ENCODE measurements at regions of chr18 and their contacts with region 1.

Region 1: DNA sequence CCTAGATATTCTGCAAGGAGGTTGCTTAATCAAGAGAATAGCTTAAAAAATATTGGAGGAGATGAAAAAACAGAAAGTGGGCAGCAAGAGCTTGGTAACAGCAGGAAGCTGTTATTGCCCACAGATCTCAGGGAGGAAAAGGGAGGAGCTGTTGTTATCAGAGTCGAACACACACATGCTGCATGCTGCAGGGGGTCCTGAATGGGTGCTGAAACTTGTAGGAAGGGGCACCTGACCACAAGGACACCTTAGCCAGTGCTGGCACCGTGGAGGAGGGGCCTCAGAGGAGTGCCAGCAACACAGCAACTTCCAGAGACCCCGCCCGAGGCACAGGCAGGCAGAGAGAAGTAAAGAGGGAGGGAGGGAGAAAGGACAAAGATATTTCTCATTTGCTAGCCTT is 332.9 kb downstream of the SOCS6 start:
- DNase-seq: no peak
- ATAC-seq: no peak
- H3K4me3 ChIP-seq: no peak overlapping the region
- H3K27ac ChIP-seq: no peak overlapping the region
- H3K4me1 ChIP-seq: no peaks in the 10 kb centered on the region
- H3K27me3 ChIP-seq: no peaks in the 10 kb centered on the region
- CTCF ChIP-seq: no peak
- EP300 ChIP-seq: no peak
- POLR2A ChIP-seq: no peak
- RAD21 ChIP-seq: no peak

Region 2: GRCh38 chr18:70720607-70721006 is 98.9 kb after region 1 on chr18:
- CTCF ChIA-PET with region 1: no interaction called
- POLR2A ChIA-PET with region 1: no interaction called
- in situ Hi-C with region 1: loop called (anchors 25 kb)
- intact Hi-C with region 1: no loop called
- DNase-seq: no peak
- ATAC-seq: no peak
- H3K4me3 ChIP-seq: no peak overlapping the region
- H3K27ac ChIP-seq: no peak overlapping the region
- H3K4me1 ChIP-seq: no peaks in the 10 kb centered on the region
- H3K27me3 ChIP-seq: no peaks in the 10 kb centered on the region
- CTCF ChIP-seq: no peak
- EP300 ChIP-seq: no peak
- POLR2A ChIP-seq: no peak
- RAD21 ChIP-seq: no peak

Region 3: GRCh38 chr18:70936160-70936559 is 314.4 kb after region 1 on chr18:
- CTCF ChIA-PET with region 1: no interaction called
- POLR2A ChIA-PET with region 1: no interaction called
- in situ Hi-C with region 1: no loop called
- intact Hi-C with region 1: no loop called
- DNase-seq: no peak
- ATAC-seq: no peak
- H3K4me3 ChIP-seq: no peak overlapping the region
- H3K27ac ChIP-seq: no peak overlapping the region
- H3K4me1 ChIP-seq: no peaks in the 10 kb centered on the region
- H3K27me3 ChIP-seq: no peaks in the 10 kb centered on the region; a peak in 1 of 5 replicates
- CTCF ChIP-seq: no peak
- EP300 ChIP-seq: no peak
- POLR2A ChIP-seq: no peak
- RAD21 ChIP-seq: no peak